H1 (cell line): ENCODE measurements at regions of chr1 and their contacts with region 1.

Region 1: GRCh38 chr1:16625497-16626408 is 12.4 kb upstream of the NBPF1 start:
- DNase-seq: peak in 1 of 2 experiments; percentile 72
- H3K4me3 ChIP-seq: no peak overlapping the region
- H3K27ac ChIP-seq: no peak overlapping the region
- H3K4me1 ChIP-seq: peaks cover 0 to 2% (median 0%) of the 10 kb centered on the region in 4 experiments; a peak in 3 of 7 replicates
- H3K27me3 ChIP-seq: no peaks in the 10 kb centered on the region
- CTCF ChIP-seq: peak in 1 of 3 experiments; percentile 12; a peak in 1 of 4 replicates
- EP300 ChIP-seq: no peak
- POLR2A ChIP-seq: no peak
- RAD21 ChIP-seq: no peak

Region 2: GRCh38 chr1:16607433-16607851 is 18.3 kb before region 1 on chr1:
- CTCF ChIA-PET with region 1: interaction called, 197 read pairs
- POLR2A ChIA-PET with region 1: interaction called, 11 read pairs
- DNase-seq: no peak
- H3K4me3 ChIP-seq: no peak overlapping the region
- H3K27ac ChIP-seq: no peak overlapping the region
- H3K4me1 ChIP-seq: peaks cover 0 to 4% (median 1%) of the 10 kb centered on the region in 4 experiments; a peak in 1 of 7 replicates
- H3K27me3 ChIP-seq: peaks cover 3 to 15% (median 9%) of the 10 kb centered on the region in 4 experiments
- CTCF ChIP-seq: no peak
- EP300 ChIP-seq: no peak
- POLR2A ChIP-seq: no peak
- RAD21 ChIP-seq: no peak

Region 3: DNA sequence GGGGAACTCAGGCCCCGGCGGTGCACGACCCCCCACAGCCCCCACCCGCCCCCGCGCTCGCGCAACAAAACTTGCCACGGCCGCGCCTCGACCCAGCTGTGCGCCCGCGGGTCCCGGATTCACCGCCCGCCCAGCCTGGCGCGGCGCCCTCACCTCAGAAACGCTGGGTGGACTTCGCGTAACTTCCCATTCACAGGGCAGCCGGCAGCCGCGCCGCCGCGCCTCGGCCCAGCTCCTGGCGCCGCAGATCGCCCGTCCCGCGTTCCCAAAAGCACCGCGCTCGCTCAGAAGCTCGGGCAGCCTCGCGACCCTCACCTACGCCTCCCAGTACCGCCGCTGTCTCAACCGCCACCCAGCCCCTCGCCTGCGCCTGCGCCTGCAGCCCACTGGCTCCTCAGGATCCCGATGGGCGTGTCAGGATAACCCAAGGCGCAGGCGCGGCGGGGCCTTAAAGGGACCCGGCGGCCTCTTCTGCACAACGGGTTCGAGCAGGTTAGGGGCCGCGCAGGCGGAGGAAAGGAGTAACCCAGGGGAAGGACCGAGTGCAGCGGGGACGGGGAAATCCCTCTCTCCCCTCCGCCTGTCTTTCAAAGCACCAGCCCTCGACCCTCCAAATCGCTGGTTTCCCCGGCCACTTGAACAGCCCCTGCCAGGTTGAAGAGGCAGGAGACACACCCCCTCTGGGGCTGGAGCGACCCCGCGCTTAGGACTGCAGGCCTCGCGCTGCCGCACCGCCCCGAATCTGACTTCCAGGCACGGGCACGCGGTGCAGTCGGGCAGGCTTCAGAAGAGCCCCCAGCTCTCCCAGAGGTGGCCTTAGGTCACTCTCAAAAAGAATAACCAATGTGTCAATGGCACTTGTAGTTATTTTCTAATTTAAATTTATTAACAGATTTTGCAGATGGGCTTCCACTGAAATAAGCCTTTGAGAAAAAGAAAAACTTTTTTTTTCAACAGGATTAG is 12.3 kb before region 1 on chr1 and contains the start of gene NBPF1:
- CTCF ChIA-PET with region 1: interaction called, 239 read pairs
- POLR2A ChIA-PET with region 1: interaction called, 11 read pairs
- DNase-seq: peak; percentile 99 to 100
- H3K4me3 ChIP-seq: peak within 1 kb of the TSS; percentile 49 to 88 (median 56)
- H3K27ac ChIP-seq: no peak within 1 kb of the TSS
- H3K4me1 ChIP-seq: peaks cover 0 to 10% (median 3%) of the 10 kb centered on the region in 4 experiments; a peak in 2 of 7 replicates
- H3K27me3 ChIP-seq: peaks cover 8 to 35% (median 26%) of the 10 kb centered on the region in 4 experiments
- CTCF ChIP-seq: no peak
- EP300 ChIP-seq: peak in 1 of 2 experiments; percentile 64; a peak in 2 of 3 replicates
- POLR2A ChIP-seq: peak in 1 of 2 experiments; percentile 77; a peak in 2 of 3 replicates
- RAD21 ChIP-seq: peak in 1 of 2 experiments; percentile 18; a peak in 3 of 4 replicates
- total RNA-seq, gene NBPF1: 19.3 and 19.4 TPM in 2 replicates

Region 4: GRCh38 chr1:16644193-16644481 is 18.4 kb after region 1 on chr1:
- CTCF ChIA-PET with region 1: interaction called, 239 read pairs
- POLR2A ChIA-PET with region 1: interaction called, 5 read pairs
- DNase-seq: no peak
- H3K4me3 ChIP-seq: peak overlapping the region; percentile 48 to 100 (median 70)
- H3K27ac ChIP-seq: no peak overlapping the region; the same call in 1 of the 2 replicates
- H3K4me1 ChIP-seq: peaks cover 0 to 19% (median 12%) of the 10 kb centered on the region in 4 experiments; a peak in 6 of 7 replicates
- H3K27me3 ChIP-seq: peaks cover 7 to 23% (median 18%) of the 10 kb centered on the region in 4 experiments; a peak in 6 of 7 replicates
- CTCF ChIP-seq: no peak; a peak in 1 of 4 replicates
- EP300 ChIP-seq: no peak
- POLR2A ChIP-seq: no peak
- RAD21 ChIP-seq: 0 out of 4 replicates have a peak, but pooled peaks of 1 of the 2 experiments have one; percentile 0

Region 5: DNA sequence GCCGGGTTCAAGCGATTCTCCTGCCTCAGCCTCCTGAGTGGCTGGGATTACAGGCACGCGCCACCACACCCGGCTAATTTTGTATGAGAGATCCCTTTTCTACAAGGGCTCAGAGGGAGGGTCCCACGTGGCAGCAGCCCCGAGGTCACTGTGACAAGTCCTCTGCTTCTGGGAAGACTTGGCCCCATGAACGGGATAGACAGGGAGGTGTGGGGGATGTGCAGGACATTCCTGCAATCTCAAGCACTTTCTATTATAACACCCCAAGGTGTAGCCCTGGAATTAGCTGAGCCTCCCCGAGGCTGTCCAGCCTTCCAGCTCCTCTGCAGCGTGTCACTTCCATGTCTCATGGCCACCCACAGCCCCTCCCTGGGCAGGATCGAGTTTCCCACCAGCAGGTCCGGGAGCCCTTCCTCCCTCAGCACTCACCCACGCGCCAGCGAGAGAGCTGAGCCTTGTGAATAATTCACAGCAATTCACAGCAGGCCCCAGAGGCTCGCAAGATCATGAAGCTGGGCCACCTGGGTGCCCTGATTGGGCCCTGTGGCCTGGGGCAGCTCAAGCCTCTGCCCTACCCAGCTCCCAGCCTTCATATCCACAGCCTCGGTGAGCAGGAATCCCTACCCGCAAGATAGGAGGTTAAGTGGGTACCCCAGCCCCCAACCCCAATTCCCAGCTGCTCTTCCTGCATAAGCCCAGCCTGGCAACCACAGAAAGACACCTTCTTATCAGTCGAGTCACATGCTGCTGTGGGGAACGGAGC is 91.8 kb after region 1 on chr1:
- CTCF ChIA-PET with region 1: interaction called, 13 read pairs
- POLR2A ChIA-PET with region 1: no interaction called
- DNase-seq: peak in 1 of 2 experiments; percentile 66
- H3K4me3 ChIP-seq: no peak overlapping the region
- H3K27ac ChIP-seq: no peak overlapping the region
- H3K4me1 ChIP-seq: peaks cover 0 to 6% (median 6%) of the 10 kb centered on the region in 4 experiments; a peak in 5 of 7 replicates
- H3K27me3 ChIP-seq: no peaks in the 10 kb centered on the region; a peak in 1 of 7 replicates
- CTCF ChIP-seq: no peak
- EP300 ChIP-seq: no peak
- POLR2A ChIP-seq: no peak
- RAD21 ChIP-seq: no peak